Activated CD8-positive, alpha-beta memory T cell treated with anti-CD3 and anti-CD28 coated beads, Interleukin-2, amount 10 ng/mL, durations not matched to agents 7 days and 5 days (primary cell): ENCODE measurements at regions of chr1 and their contacts with region 1.

Region 1: DNA sequence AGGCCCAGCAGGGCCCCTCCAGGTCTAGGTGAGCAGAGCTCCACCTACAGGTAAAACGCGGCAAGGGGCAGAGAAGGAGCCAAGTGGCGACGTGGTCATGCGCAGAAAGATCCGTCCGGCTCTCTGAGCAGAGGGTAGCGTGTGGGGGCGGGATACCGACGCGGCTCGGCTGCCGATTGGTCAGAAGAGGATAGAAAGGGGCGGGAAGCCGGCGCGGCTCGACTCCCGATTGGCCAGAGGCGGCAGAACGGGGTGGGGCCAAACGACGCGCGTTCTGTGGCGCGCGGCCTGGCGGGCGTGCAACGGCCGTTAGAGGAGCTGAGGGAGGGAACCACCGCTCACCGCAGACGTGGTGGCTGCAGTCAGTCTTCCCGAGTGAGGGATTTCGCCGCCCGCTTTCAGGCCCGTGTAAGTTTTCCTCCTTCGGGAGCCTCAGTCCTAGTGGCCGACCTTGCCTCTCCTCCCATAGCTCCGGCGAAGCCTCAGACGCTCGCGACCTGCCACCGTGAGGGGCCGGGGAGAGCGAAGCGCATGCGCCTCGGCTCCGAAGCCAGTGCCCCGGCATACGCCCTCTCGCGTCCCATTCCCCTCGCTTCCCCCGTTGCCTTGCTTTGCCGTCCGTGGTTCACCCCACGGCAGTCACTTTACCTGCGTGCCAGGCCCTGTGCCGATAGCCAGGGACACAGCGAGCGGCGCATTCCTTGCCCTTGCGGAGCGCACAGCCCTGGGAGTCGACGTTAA is at the start of gene CEP85:
- DNase-seq: peak; percentile 99
- ATAC-seq: peak; percentile 95
- H3K4me3 Mint-ChIP-seq: peak within 1 kb of the TSS; percentile 96
- H3K27ac Mint-ChIP-seq: peak within 1 kb of the TSS; percentile 88
- H3K4me1 Mint-ChIP-seq: peaks cover 36% of the 10 kb centered on the region
- H3K27me3 Mint-ChIP-seq: no peaks in the 10 kb centered on the region
- total RNA-seq, gene CEP85: 42.0 to 56.3 TPM

Region 2: DNA sequence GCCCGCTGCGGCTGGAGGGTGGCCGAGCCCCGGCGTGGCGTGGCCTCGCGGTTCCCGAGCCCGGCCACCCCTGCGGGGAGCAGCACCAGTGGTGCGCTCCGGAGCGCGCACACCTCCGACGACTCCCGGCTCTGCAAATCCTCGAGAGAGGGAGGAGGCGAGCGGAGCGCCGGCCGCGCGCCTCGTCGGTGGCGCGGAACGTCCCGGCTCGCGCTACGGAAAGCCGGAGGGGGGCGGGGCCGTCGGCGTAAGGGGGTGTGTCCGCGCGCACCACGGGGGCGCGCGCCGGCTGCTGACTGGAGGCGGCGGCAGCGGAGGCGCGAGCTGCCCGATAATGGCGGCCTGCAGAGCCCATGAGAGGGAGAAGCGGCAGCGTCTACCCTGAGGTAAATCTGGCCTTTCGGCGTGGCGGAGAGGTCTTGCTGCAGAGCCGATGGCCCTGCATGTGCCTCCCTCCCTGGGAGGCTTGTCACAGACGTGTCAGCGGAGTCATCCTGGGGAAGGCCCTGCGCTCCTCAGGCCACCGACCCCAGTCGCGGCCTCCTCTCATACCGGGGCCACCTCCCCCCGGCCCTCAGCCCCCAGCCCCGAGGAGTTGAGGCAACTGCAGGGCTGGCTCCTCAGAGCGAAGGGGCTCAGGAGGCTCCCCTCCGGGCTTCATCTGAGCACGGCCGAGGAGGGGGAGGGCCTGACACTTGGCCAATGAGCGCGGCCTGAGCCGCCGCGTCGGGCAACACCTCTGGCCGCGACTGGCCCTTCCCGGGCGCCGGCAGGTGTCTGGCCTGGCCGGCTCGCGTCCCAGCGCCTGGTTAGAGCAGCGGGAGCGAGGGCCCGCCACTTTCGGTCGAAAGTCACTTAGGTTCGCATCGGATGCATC is 122.3 kb before region 1 on chr1 and contains the start of gene PDIK1L:
- CTCF ChIA-PET with region 1: interaction called, 10 read pairs
- DNase-seq: peak; percentile 94
- ATAC-seq: peak; percentile 87
- H3K4me3 Mint-ChIP-seq: peak within 1 kb of the TSS; percentile 91
- H3K27ac Mint-ChIP-seq: peak within 1 kb of the TSS; percentile 94
- H3K4me1 Mint-ChIP-seq: peaks cover 30% of the 10 kb centered on the region
- H3K27me3 Mint-ChIP-seq: no peaks in the 10 kb centered on the region
- total RNA-seq, gene PDIK1L: 18.3 to 20.2 TPM

Region 3: GRCh38 chr1:26169669-26170471 is 64.2 kb before region 1 on chr1 and contains the start of gene ZNF593:
- CTCF ChIA-PET with region 1: interaction called, 105 read pairs
- DNase-seq: peak; percentile 92
- ATAC-seq: peak; percentile 97
- H3K4me3 Mint-ChIP-seq: peak within 1 kb of the TSS; percentile 89
- H3K27ac Mint-ChIP-seq: peak within 1 kb of the TSS; percentile 88
- H3K4me1 Mint-ChIP-seq: peaks cover 26% of the 10 kb centered on the region
- H3K27me3 Mint-ChIP-seq: peaks cover 11% of the 10 kb centered on the region
- total RNA-seq, gene ZNF593: 40.1 to 48.1 TPM

Region 4: GRCh38 chr1:26218906-26219494 is 15.1 kb before region 1 on chr1:
- CTCF ChIA-PET with region 1: interaction called, 26 read pairs
- DNase-seq: no peak
- ATAC-seq: no peak
- H3K4me3 Mint-ChIP-seq: no peak overlapping the region
- H3K27ac Mint-ChIP-seq: no peak overlapping the region
- H3K4me1 Mint-ChIP-seq: no peaks in the 10 kb centered on the region
- H3K27me3 Mint-ChIP-seq: peaks cover 11% of the 10 kb centered on the region

Region 5: GRCh38 chr1:26321315-26322041 is 87.4 kb after region 1 on chr1:
- CTCF ChIA-PET with region 1: interaction called, 29 read pairs
- DNase-seq: peak; percentile 97
- ATAC-seq: peak; percentile 74
- H3K4me3 Mint-ChIP-seq: peak overlapping the region; percentile 73
- H3K27ac Mint-ChIP-seq: peak overlapping the region; percentile 95
- H3K4me1 Mint-ChIP-seq: peaks cover 49% of the 10 kb centered on the region
- H3K27me3 Mint-ChIP-seq: no peaks in the 10 kb centered on the region

Region 6: DNA sequence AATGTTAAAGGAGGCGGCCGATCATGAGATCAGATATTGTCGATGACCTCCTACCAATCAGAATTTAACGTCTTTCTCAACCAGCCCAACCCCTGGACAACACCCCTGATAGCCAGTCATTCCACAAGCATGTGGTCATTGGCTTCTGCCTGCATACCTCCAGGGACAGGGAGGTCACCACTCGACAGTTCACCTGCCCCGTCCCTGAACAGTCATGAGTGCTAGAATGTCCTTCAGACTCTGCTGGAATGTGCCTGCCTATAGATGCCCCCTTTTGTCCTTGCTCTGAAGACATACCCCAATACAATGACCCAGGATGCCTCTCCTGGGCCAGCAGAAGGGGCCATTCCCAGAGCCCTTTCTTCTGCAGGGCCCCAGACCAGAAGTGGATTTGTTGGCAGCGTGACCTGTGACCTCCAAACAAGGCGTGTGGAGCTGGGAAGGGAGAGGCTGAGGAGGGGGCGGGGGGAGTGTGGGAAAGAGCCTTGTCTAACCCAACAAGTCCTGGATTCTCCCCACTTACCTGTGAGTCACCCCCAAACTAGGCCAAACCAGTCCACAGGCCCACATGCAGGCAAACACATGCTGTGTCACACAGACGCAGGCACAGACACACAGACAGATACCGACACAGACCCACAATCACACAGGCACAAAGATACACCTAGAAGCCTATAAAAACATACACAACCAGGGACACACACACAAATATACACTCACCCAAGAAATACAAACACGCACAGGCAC is 117.7 kb after region 1 on chr1:
- CTCF ChIA-PET with region 1: no interaction called
- DNase-seq: no peak
- ATAC-seq: no peak
- H3K4me3 Mint-ChIP-seq: no peak overlapping the region
- H3K27ac Mint-ChIP-seq: no peak overlapping the region
- H3K4me1 Mint-ChIP-seq: peaks cover 7% of the 10 kb centered on the region
- H3K27me3 Mint-ChIP-seq: no peaks in the 10 kb centered on the region

Region 7: DNA sequence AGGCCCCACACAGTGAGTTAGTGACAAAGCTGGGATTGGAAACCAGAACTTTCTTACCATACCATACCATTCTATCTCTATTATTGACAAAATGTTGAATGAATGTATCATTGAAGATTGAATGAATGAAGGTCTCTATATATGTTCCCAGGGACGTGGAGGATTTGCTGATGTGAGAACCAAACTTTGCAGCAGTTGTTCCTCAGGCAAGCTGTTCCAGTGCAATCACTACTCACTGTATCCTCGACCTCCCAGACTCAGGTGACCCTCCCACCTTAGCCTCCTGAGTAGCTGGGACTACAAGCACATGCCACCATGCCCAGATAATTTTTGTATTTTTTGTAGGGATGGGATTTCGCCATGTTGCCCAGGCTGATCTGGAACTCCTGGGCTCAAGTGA is 165.0 kb after region 1 on chr1:
- CTCF ChIA-PET with region 1: interaction called, 14 read pairs
- DNase-seq: no peak
- ATAC-seq: no peak
- H3K4me3 Mint-ChIP-seq: no peak overlapping the region
- H3K27ac Mint-ChIP-seq: no peak overlapping the region
- H3K4me1 Mint-ChIP-seq: peaks cover 5% of the 10 kb centered on the region
- H3K27me3 Mint-ChIP-seq: peaks cover 20% of the 10 kb centered on the region